SK-N-SH (cell line): ENCODE measurements at regions of chr16 and their contacts with region 1.

Region 1: GRCh38 chr16:23435500-23435899 is 17.5 kb downstream of the COG7 start:
- DNase-seq: peak; percentile 67
- H3K4me3 ChIP-seq: no peak overlapping the region; a peak in 1 of 4 replicates
- H3K27ac ChIP-seq: no peak overlapping the region
- H3K4me1 ChIP-seq: no peaks in the 10 kb centered on the region
- H3K27me3 ChIP-seq: no peaks in the 10 kb centered on the region
- CTCF ChIP-seq: peak; percentile 90
- EP300 ChIP-seq: no peak
- RAD21 ChIP-seq: peak; percentile 66

Region 2: GRCh38 chr16:23060458-23061320 is 374.8 kb before region 1 on chr16:
- CTCF ChIA-PET with region 1: interaction called, 10 read pairs
- POLR2A ChIA-PET with region 1: no interaction called
- DNase-seq: peak; percentile 75
- H3K4me3 ChIP-seq: no peak overlapping the region; a peak in 1 of 4 replicates
- H3K27ac ChIP-seq: no peak overlapping the region
- H3K4me1 ChIP-seq: peaks cover 0 to 2% of the 10 kb centered on the region in 2 experiments; a peak in 1 of 4 replicates
- H3K27me3 ChIP-seq: no peaks in the 10 kb centered on the region
- CTCF ChIP-seq: peak; percentile 85
- EP300 ChIP-seq: no peak
- RAD21 ChIP-seq: peak; percentile 92

Region 3: DNA sequence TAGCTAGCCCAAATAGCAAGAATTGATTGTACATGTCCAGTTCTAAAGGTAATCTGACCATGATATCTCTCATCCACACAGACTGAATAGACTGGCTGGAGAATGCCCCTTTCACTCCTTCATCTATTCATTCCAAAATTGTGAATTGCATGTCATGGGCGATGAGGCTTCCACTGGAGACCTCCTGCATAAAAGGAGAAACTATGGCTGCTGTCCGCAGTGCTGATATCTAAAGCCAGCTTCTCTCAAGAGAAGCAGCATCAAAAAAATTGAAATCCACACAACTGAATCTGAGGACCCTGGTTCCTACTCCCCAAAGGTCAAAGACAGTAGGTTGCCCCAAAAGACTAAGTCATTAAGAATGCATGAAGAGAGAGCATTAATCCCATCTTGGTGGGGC is 260.9 kb before region 1 on chr16:
- CTCF ChIA-PET with region 1: interaction called, 290 read pairs
- POLR2A ChIA-PET with region 1: no interaction called
- DNase-seq: no peak
- H3K4me3 ChIP-seq: no peak overlapping the region
- H3K27ac ChIP-seq: no peak overlapping the region
- H3K4me1 ChIP-seq: no peaks in the 10 kb centered on the region
- H3K27me3 ChIP-seq: no peaks in the 10 kb centered on the region
- CTCF ChIP-seq: no peak
- EP300 ChIP-seq: no peak
- RAD21 ChIP-seq: no peak

Region 4: GRCh38 chr16:23207493-23207892 is 228.0 kb before region 1 on chr16:
- CTCF ChIA-PET with region 1: interaction called, 15 read pairs
- POLR2A ChIA-PET with region 1: no interaction called
- DNase-seq: peak; percentile 57
- H3K4me3 ChIP-seq: no peak overlapping the region
- H3K27ac ChIP-seq: peak overlapping the region in 1 of 2 experiments; percentile 78; a peak in 1 of 4 replicates
- H3K4me1 ChIP-seq: peaks cover 0 to 11% of the 10 kb centered on the region in 2 experiments; a peak in 1 of 4 replicates
- H3K27me3 ChIP-seq: no peaks in the 10 kb centered on the region; the same call in 1 of the 2 replicates
- CTCF ChIP-seq: no peak
- EP300 ChIP-seq: no peak
- RAD21 ChIP-seq: no peak

Region 5: GRCh38 chr16:23398987-23399805 is 36.3 kb before region 1 on chr16:
- CTCF ChIA-PET with region 1: interaction called, 28 read pairs
- POLR2A ChIA-PET with region 1: no interaction called
- DNase-seq: no peak
- H3K4me3 ChIP-seq: no peak overlapping the region
- H3K27ac ChIP-seq: no peak overlapping the region
- H3K4me1 ChIP-seq: no peaks in the 10 kb centered on the region
- H3K27me3 ChIP-seq: no peaks in the 10 kb centered on the region
- CTCF ChIP-seq: no peak
- EP300 ChIP-seq: no peak
- RAD21 ChIP-seq: no peak

Region 6: DNA sequence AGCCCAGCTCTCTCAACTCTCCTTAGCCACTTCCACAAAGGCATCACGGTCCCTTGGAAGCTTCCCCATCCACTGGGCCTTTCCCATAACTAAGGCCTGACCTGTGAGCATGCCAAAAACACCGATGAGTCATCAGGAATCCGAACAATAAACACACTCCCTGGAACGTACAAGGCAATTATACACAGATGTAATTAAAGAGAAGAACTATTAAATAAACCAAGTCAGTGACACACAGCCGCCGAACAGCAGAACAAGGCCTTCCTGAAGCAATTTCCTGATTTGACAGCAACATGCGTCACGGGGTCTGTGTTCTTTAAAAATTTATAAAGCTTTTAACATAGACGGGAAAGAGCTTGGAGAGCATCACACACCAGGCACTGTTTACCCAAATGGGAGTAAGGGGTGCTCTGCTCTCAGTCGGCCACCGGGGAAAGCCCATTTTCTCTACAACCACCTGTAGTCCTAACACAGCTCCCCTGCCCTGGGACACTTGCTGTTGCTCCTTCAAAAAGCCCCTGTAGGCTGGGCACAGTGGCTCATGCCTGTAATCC is 11.9 kb before region 1 on chr16:
- CTCF ChIA-PET with region 1: interaction called, 24 read pairs
- POLR2A ChIA-PET with region 1: no interaction called
- DNase-seq: no peak
- H3K4me3 ChIP-seq: no peak overlapping the region
- H3K27ac ChIP-seq: peak overlapping the region in 1 of 2 experiments; percentile 66; a peak in 2 of 4 replicates
- H3K4me1 ChIP-seq: peaks cover 0 to 10% of the 10 kb centered on the region in 2 experiments; a peak in 2 of 4 replicates
- H3K27me3 ChIP-seq: no peaks in the 10 kb centered on the region
- CTCF ChIP-seq: no peak
- EP300 ChIP-seq: no peak
- RAD21 ChIP-seq: no peak